GM12878 (cell line): ENCODE measurements at regions of chr17 and their contacts with region 1.

Region 1: DNA sequence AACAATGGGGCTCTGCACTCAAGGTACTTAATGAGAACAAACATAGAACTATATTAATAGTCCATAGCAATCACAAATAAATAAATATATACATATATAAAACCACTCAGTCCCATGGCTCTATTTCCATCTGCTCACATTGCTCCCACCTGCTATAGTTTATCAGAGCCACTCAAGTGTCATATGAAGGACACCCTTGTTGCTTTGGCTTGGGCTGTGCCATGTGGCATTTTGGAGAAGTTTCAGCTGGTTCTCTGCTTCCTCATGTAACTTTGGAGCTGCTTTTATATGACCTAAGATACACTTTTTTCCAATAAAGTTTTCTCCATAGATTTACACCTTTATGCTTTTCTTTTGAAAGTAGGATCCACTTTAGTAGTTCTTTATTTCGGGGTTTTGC is 126.4 kb downstream of the KCNJ2 start:
- DNase-seq: no peak
- ATAC-seq: no peak
- H3K4me3 ChIP-seq: no peak overlapping the region
- H3K27ac ChIP-seq: no peak overlapping the region
- H3K4me1 ChIP-seq: no peaks in the 10 kb centered on the region
- H3K27me3 ChIP-seq: no peaks in the 10 kb centered on the region
- CTCF ChIP-seq: no peak
- EP300 ChIP-seq: no peak
- POLR2A ChIP-seq: no peak
- RAD21 ChIP-seq: no peak

Region 2: DNA sequence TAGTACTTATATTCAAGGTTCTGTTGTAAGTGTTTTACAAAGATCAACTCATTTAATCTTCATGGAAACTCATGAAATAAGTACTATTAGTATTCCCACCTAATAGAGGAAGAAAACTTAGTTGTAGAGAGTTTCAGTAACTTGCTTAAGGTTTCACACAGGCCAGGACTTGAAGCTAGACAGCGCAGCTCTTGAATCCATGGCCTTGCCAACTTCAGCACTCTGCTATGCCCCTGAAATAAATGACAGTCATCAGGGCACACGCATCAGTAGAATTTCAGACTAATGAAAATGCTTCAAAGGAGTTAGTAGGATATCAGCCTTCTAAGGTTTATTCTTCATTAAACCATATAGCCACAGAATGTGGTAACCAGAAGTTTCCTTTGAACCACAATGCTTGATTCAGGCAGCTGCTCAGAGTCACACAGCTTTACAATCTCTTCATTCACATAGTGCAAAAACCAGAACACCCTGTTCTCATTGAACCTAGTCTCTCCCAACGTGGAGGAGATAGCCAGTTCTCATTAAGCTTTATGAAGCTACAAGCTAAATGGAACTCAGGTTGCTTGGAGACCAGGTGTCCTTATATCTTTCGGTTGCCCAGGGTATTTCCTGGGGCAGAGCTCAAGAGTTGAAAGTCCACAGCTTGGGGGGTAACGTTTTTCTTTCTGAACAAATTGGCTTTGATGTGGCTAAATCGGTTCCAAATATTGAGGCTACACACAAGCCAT is 86.7 kb before region 1 on chr17:
- CTCF ChIA-PET with region 1: interaction called, 6 read pairs
- POLR2A ChIA-PET with region 1: interaction called, 4 read pairs
- RAD21 ChIA-PET with region 1: interaction called, 60 read pairs
- SMC1A ChIA-PET with region 1: interaction called, 48 read pairs
- in situ Hi-C with region 1: no loop called
- intact Hi-C with region 1: loop called (anchors 5 kb)
- DNase-seq: peak; percentile 28
- ATAC-seq: peak; percentile 86
- H3K4me3 ChIP-seq: no peak overlapping the region
- H3K27ac ChIP-seq: no peak overlapping the region
- H3K4me1 ChIP-seq: no peaks in the 10 kb centered on the region; the same call in 1 of the 2 replicates
- H3K27me3 ChIP-seq: no peaks in the 10 kb centered on the region
- CTCF ChIP-seq: no peak
- EP300 ChIP-seq: peak; percentile 68 to 72; a peak in 2 of 4 replicates
- POLR2A ChIP-seq: no peak
- RAD21 ChIP-seq: no peak

Region 3: DNA sequence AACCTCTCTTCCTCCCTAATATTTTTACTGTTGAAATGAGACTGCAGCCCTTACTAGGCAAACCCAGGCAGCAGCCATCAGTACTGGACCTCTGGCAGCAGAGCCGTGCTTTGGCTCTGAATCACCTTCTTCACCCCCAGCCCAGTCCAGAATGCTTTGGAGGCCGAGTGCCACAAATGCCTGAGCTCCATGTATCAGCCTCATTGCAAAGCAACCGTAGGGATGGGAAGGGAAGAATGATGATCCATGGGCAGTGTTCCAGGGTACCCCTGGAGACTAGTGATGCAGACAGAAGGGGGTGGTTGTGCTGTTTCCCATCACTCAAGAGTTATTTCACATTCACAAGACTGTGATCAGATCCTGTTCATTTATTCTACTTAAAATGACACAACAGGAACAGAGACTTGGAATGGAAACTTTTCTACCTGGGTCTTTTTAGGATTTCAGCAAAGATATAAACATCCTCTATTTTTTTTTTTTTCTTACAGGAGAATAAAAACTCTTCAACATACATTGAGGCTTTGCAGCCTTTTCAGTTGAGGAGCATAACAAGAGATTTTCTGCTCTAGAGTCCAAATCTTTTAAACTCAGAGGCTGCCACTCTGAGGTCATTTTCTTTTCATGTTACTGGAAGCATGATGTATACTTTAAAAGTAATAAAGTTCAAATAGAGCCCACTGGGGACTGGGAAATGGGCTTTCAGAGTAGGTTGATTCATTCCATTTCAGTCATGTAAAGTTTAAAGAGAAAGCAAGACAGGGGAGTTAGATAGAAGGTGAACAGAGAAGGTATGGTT is 11.9 kb after region 1 on chr17:
- CTCF ChIA-PET with region 1: interaction called, 10 read pairs
- POLR2A ChIA-PET with region 1: interaction called, 12 read pairs
- RAD21 ChIA-PET with region 1: interaction called, 25 read pairs
- SMC1A ChIA-PET with region 1: interaction called, 27 read pairs
- in situ Hi-C with region 1: no loop called
- intact Hi-C with region 1: no loop called
- DNase-seq: no peak
- ATAC-seq: peak; percentile 40; the same call in 1 of the 3 replicates
- H3K4me3 ChIP-seq: no peak overlapping the region
- H3K27ac ChIP-seq: no peak overlapping the region
- H3K4me1 ChIP-seq: no peaks in the 10 kb centered on the region
- H3K27me3 ChIP-seq: no peaks in the 10 kb centered on the region
- CTCF ChIP-seq: no peak
- EP300 ChIP-seq: no peak
- POLR2A ChIP-seq: no peak
- RAD21 ChIP-seq: no peak

Region 4: GRCh38 chr17:70338946-70339354 is 43.2 kb after region 1 on chr17:
- CTCF ChIA-PET with region 1: interaction called, 3 read pairs
- POLR2A ChIA-PET with region 1: interaction called, 4 read pairs
- RAD21 ChIA-PET with region 1: interaction called, 12 read pairs
- SMC1A ChIA-PET with region 1: interaction called, 14 read pairs
- in situ Hi-C with region 1: no loop called
- intact Hi-C with region 1: no loop called
- DNase-seq: no peak
- ATAC-seq: peak; percentile 86
- H3K4me3 ChIP-seq: no peak overlapping the region
- H3K27ac ChIP-seq: no peak overlapping the region
- H3K4me1 ChIP-seq: no peaks in the 10 kb centered on the region
- H3K27me3 ChIP-seq: no peaks in the 10 kb centered on the region
- CTCF ChIP-seq: no peak
- EP300 ChIP-seq: peak in 1 of 2 experiments; percentile 39; a peak in 1 of 4 replicates
- POLR2A ChIP-seq: no peak
- RAD21 ChIP-seq: no peak

Region 5: GRCh38 chr17:70353408-70354092 is 57.8 kb after region 1 on chr17:
- CTCF ChIA-PET with region 1: interaction called, 3 read pairs
- POLR2A ChIA-PET with region 1: interaction called, 3 read pairs
- RAD21 ChIA-PET with region 1: interaction called, 11 read pairs
- SMC1A ChIA-PET with region 1: interaction called, 10 read pairs
- in situ Hi-C with region 1: no loop called
- intact Hi-C with region 1: loop called (anchors 5 kb)
- DNase-seq: no peak
- ATAC-seq: peak; percentile 83
- H3K4me3 ChIP-seq: no peak overlapping the region
- H3K27ac ChIP-seq: no peak overlapping the region
- H3K4me1 ChIP-seq: no peaks in the 10 kb centered on the region
- H3K27me3 ChIP-seq: no peaks in the 10 kb centered on the region
- CTCF ChIP-seq: no peak
- EP300 ChIP-seq: no peak
- POLR2A ChIP-seq: no peak
- RAD21 ChIP-seq: no peak